ENCODE measurements at regions of chr6 and their contacts with region 1.

Region 1: GRCh38 chr6:106085984-106086813 is at the start of gene PRDM1:
- DNase-seq: peak; percentile 96
- H3K4me3 ChIP-seq: peak within 1 kb of the TSS; percentile 63 to 79 (median 73)
- H3K27ac ChIP-seq: peak within 1 kb of the TSS; percentile 86
- H3K4me1 ChIP-seq: peaks cover 37% of the 10 kb centered on the region
- H3K27me3 ChIP-seq: no peaks in the 10 kb centered on the region
- CTCF ChIP-seq: peak; percentile 31 to 67
- total RNA-seq, gene PRDM1: 5.7 to 17.7 TPM

Region 2: DNA sequence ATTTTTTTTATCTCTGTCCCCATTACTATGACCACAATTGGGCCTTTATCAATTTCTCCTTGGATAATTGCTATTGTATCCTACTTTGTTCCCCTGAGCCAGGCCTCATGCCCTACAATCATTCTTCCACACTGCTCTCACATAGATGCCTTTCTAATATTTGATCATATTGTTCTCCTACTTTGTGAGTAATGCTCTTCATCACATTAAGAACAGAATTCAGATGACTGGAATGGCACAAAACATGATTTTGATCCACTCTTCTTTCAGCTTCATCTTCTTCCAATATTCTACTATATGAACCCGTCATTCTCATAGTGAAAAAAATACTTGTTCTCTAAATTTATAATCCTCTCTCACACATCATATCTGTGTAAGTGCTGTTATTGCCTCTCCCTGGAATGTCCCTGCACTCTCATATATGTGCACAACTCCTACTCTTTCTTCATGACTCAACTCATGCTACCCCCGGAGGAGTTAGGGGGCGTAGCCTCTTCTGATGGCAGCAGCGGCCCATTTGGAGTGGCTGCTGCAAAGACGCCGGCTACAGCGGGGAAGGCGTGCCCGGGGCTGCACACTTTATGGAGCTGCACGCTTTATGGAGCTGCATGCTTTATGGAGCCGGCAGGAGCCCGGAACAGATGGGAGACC is 1201.2 kb before region 1 on chr6:
- CTCF ChIA-PET with region 1: no interaction called
- dilution Hi-C with region 1: no loop called
- in situ Hi-C with region 1: no loop called
- intact Hi-C with region 1: no loop called
- DNase-seq: no peak
- H3K4me3 ChIP-seq: no peak overlapping the region
- H3K27ac ChIP-seq: no peak overlapping the region
- H3K4me1 ChIP-seq: no peaks in the 10 kb centered on the region
- H3K27me3 ChIP-seq: no peaks in the 10 kb centered on the region
- CTCF ChIP-seq: no peak

Region 3: GRCh38 chr6:105097288-105097687 is 988.9 kb before region 1 on chr6:
- CTCF ChIA-PET with region 1: no interaction called
- dilution Hi-C with region 1: no loop called
- in situ Hi-C with region 1: no loop called
- intact Hi-C with region 1: loop called (anchors 10 kb)
- DNase-seq: peak; percentile 7
- H3K4me3 ChIP-seq: no peak overlapping the region
- H3K27ac ChIP-seq: no peak overlapping the region
- H3K4me1 ChIP-seq: no peaks in the 10 kb centered on the region
- H3K27me3 ChIP-seq: no peaks in the 10 kb centered on the region
- CTCF ChIP-seq: no peak

Region 4: GRCh38 chr6:105522626-105523322 is 563.4 kb before region 1 on chr6:
- CTCF ChIA-PET with region 1: no interaction called
- dilution Hi-C with region 1: no loop called
- in situ Hi-C with region 1: no loop called
- intact Hi-C with region 1: loop called (anchors 1 kb)
- DNase-seq: peak; percentile 70
- H3K4me3 ChIP-seq: no peak overlapping the region
- H3K27ac ChIP-seq: peak overlapping the region; percentile 44
- H3K4me1 ChIP-seq: peaks cover 9% of the 10 kb centered on the region
- H3K27me3 ChIP-seq: no peaks in the 10 kb centered on the region
- CTCF ChIP-seq: no peak

Region 5: DNA sequence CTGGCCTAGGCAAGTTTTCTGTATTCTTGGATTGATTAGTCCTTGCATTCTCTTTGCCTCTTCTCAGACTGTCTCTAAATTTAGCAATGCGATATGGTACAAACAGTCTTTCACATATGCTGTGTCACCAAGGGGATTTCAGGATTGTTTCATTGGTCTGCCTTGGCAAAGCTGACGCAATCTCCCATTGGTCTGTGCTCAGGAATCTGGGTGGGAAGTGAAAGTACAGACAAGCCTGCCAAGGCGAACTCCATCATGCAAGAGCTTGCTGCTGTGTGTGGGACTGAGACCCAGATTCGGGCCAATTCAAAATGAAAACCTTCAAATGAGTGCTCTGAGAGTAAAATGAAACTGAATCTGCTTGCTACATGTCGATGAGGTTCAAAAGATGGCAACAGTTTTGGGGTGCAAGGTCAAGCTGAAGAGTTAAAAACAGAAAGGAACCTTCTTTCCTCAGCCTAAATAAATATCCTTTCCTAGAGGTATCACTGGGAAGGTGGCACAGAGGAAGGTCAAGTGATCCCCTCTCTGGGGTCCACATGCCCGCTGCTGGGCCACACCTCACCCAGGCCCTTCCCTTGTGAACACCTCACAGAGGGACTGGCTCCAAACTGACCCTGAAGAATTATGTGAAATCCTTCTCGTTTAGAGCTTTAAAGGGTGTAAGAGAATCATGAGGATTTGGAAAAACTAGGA is 484.5 kb before region 1 on chr6:
- CTCF ChIA-PET with region 1: no interaction called
- dilution Hi-C with region 1: no loop called
- in situ Hi-C with region 1: loop called in 1 of 2 experiments (anchors 10 kb)
- intact Hi-C with region 1: loop called (anchors 1 kb)
- DNase-seq: peak; percentile 100
- H3K4me3 ChIP-seq: no peak overlapping the region
- H3K27ac ChIP-seq: peak overlapping the region; percentile 100
- H3K4me1 ChIP-seq: peaks cover 39% of the 10 kb centered on the region
- H3K27me3 ChIP-seq: no peaks in the 10 kb centered on the region
- CTCF ChIP-seq: no peak

Region 6: DNA sequence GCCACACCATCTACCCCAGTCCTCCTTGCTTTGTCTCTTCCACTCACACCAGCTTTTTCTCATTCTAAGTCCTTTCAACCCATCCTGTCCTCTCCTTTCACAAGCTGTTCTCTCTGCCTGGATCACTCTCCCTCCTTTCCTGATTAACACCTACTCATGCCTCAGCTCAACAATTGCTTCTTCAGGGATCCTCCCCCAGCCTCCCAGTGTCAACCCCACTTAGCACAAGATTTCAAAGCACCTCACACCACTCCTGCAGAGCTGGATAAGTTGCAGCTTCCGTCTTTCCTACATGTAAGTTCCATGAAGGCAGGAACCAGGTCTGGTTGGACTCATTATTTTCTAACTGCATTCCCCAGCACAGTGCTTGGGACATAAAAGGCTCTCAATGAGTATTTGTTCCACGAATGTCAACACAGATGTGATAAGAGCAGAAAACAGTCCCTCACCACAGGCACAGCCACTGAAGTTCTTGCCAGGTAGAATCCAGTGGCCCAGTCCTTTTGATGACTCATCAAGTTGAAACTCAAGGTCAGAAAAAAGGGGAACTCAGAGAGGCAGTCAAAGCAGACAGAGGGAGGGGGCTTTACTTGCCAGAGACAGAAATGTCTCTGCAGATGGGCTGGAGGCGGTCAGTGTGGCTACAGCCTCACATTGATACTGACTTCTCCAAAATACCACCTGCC is 193.5 kb before region 1 on chr6:
- CTCF ChIA-PET with region 1: no interaction called
- dilution Hi-C with region 1: no loop called
- in situ Hi-C with region 1: no loop called
- intact Hi-C with region 1: loop called (anchors 10 kb)
- DNase-seq: peak; percentile 27
- H3K4me3 ChIP-seq: no peak overlapping the region
- H3K27ac ChIP-seq: no peak overlapping the region
- H3K4me1 ChIP-seq: peaks cover 7% of the 10 kb centered on the region
- H3K27me3 ChIP-seq: no peaks in the 10 kb centered on the region
- CTCF ChIP-seq: no peak

Region 7: GRCh38 chr6:106046116-106046853 is 39.9 kb before region 1 on chr6:
- CTCF ChIA-PET with region 1: no interaction called
- dilution Hi-C with region 1: no loop called
- in situ Hi-C with region 1: no loop called
- intact Hi-C with region 1: no loop called
- DNase-seq: no peak
- H3K4me3 ChIP-seq: no peak overlapping the region
- H3K27ac ChIP-seq: no peak overlapping the region
- H3K4me1 ChIP-seq: no peaks in the 10 kb centered on the region
- H3K27me3 ChIP-seq: no peaks in the 10 kb centered on the region
- CTCF ChIP-seq: no peak

Region 8: GRCh38 chr6:106141441-106142237 is 55.4 kb after region 1 on chr6:
- CTCF ChIA-PET with region 1: no interaction called
- dilution Hi-C with region 1: no loop called
- in situ Hi-C with region 1: no loop called
- intact Hi-C with region 1: no loop called
- DNase-seq: peak; percentile 54
- H3K4me3 ChIP-seq: no peak overlapping the region
- H3K27ac ChIP-seq: no peak overlapping the region
- H3K4me1 ChIP-seq: peaks cover 8% of the 10 kb centered on the region
- H3K27me3 ChIP-seq: no peaks in the 10 kb centered on the region
- CTCF ChIP-seq: no peak

Region 9: DNA sequence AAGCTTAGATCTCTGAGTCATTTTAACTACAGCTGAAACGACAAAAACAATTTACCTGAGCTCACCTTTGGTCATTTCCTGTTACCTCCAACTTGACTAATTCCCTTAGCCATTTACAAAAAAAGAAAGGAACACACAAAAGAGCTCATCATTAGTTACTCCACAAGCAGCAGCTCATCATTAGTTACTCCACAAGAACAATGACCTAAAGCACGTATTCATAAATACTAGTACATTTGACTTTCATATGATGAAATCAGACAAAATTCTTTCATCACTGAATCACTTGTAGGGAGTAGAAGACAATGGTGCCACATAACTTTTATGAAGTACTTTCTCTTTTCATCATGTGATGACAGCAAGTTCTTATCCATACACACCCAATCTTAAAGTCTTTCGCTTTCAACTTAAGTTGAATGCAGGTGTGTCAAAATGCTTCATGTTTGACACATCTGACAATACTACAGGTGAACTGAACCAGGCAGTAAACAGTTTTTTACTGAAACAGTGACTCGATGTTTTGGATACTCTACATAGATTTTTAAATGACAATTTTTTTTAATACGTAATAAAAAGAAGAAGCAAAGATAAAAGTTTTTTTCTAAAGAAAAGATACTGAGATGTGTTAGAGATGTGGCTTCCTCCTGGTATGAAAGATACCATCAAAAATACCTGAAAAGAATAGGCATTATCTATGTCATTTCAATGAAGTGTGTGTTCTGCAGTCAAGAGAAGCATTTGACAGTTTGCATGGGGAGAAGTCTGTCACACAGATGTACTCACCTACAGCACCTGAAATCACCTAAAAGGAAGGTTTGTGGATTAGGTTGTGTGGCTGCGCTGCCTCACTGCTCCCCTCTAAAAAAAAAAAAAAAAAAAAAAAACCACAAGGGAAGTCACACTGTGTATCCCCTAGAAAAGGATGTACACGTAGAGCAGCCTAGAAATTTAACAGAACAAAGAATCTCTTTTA is 109.0 kb after region 1 on chr6:
- CTCF ChIA-PET with region 1: no interaction called
- dilution Hi-C with region 1: no loop called
- in situ Hi-C with region 1: no loop called
- intact Hi-C with region 1: loop called (anchors 10 kb)
- DNase-seq: peak; percentile 99
- H3K4me3 ChIP-seq: peak overlapping the region in 1 of 3 experiments; percentile 17
- H3K27ac ChIP-seq: peak overlapping the region; percentile 99
- H3K4me1 ChIP-seq: peaks cover 42% of the 10 kb centered on the region
- H3K27me3 ChIP-seq: no peaks in the 10 kb centered on the region
- CTCF ChIP-seq: no peak